Breast epithelium (tissue), 4 donors: ENCODE measurements at regions of chr9 and their contacts with region 1.

Region 1: GRCh38 chr9:35042081-35042604 is 30.3 kb downstream of the VCP start:
- DNase-seq: no peak
- H3K4me3 ChIP-seq: no peak overlapping the region
- H3K27ac ChIP-seq: peak overlapping the region in 1 of 2 donors; percentile 14
- H3K4me1 ChIP-seq: no peaks in the 10 kb centered on the region
- H3K27me3 ChIP-seq: no peaks in the 10 kb centered on the region
- CTCF ChIP-seq: no peak
- POLR2A ChIP-seq: no peak

Region 2: DNA sequence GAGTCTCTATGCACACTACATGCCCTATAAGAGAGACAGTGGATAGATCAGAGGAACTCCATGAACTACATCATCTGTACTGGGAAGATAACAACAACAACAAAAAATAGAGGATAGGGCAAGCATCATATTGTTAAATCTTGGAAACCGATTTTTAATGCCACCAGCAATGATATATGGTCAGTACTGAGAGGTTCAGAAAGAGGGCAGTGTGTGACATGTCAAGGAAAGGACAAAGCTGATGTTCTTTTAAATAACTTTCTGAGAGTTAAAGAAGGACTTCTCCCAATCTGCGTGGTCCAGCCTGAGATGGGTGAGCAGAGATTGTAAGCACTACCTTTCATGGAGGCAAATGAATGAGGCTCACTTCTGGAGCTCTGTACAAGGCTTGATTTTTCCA is 146.0 kb before region 1 on chr9:
- intact Hi-C with region 1: no loop called
- DNase-seq: no peak
- H3K4me3 ChIP-seq: no peak overlapping the region
- H3K27ac ChIP-seq: no peak overlapping the region
- H3K4me1 ChIP-seq: no peaks in the 10 kb centered on the region
- H3K27me3 ChIP-seq: peaks cover 0 to 8% of the 10 kb centered on the region in 2 donors
- CTCF ChIP-seq: no peak
- POLR2A ChIP-seq: no peak

Region 3: DNA sequence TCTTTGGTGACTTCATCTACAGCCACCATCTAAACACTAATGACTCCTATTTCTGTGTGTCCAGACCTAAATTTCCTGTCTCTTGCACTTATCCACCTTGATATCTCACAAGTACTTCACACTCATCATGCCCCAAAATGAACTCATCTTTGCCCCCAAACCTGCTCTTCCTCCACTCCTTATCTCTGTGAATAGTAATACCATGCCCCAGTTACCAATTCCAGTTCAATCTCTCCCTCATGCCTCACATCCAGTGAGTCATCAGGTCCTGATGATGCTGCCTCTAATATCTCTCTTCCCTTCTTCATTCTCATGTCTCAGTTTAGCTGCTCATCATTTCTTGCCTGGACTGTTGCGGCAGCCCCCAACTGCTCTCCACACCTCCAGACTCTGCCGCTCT is 67.5 kb before region 1 on chr9:
- intact Hi-C with region 1: loop called (anchors 10 kb)
- DNase-seq: no peak
- H3K4me3 ChIP-seq: no peak overlapping the region
- H3K27ac ChIP-seq: no peak overlapping the region
- H3K4me1 ChIP-seq: no peaks in the 10 kb centered on the region
- H3K27me3 ChIP-seq: no peaks in the 10 kb centered on the region
- CTCF ChIP-seq: no peak
- POLR2A ChIP-seq: no peak